GM12878 (cell line): ENCODE measurements at regions of chr3 and their contacts with region 1.

Region 1: DNA sequence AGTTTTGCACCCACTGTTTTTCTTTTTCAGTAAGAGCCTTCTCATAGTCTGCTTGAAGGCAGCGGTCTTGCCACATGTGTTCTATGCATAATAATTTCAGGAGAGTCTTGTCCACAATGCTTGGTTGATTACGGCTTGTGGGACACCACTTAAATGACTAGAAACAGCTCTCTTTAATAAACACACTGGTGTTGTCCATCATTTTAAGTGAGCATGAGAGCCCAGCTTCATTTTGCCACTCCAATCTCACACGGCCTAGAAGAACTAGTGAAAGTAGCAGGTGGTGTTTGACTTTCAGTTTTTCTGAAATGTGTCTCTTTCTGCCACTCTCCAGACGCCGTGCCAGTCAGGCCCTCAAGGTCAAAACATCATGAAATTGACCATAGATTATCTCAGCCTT is 292.1 kb downstream of the LPP start:
- DNase-seq: peak; percentile 70
- ATAC-seq: peak; percentile 83
- H3K4me3 ChIP-seq: no peak overlapping the region
- H3K27ac ChIP-seq: no peak overlapping the region; the same call in 1 of the 2 replicates
- H3K4me1 ChIP-seq: peaks cover 14% of the 10 kb centered on the region
- H3K27me3 ChIP-seq: no peaks in the 10 kb centered on the region
- CTCF ChIP-seq: no peak
- EP300 ChIP-seq: no peak
- POLR2A ChIP-seq: no peak
- RAD21 ChIP-seq: no peak

Region 2: DNA sequence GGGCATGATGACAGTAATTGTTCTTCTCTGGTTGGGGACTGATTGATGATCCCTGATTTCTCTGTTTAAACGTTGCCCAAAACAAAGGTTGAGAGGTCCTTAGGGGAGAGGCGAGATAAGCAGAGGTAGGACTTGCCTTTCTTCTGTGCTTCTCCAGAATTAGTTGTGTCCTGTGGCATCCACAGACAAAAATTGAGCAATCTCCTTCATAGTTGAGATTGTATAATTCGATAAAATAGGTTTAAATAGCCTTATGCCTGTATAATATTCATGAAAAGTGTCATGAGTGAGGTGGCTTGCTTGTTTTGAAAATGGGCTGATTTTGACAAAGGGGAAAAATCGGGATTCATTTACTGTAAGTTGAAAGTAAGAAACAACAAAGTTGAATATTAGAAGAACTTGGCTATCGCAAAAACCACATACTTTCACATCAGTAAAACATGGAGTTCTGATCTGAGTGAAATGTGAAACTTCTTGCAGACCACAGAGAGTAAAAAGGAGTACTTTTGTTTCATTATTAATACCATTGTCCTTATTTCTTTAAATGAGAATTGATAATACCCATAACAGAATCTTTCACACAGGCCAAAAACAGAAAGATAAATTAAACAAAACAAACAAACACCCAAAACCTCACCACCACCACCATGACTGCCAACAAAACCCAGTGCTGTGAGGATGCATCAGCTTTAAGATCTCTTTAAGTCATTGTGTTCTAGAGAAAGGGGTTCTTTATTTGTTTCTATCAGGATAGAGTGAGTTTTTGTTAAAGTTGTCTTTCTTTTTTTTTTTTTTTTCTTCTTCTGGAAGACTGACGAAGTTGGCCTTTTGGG is 136.4 kb before region 1 on chr3:
- CTCF ChIA-PET with region 1: no interaction called
- POLR2A ChIA-PET with region 1: no interaction called
- RAD21 ChIA-PET with region 1: no interaction called
- SMC1A ChIA-PET with region 1: no interaction called
- in situ Hi-C with region 1: no loop called
- intact Hi-C with region 1: loop called (anchors 1 kb)
- DNase-seq: peak; percentile 54
- ATAC-seq: peak; percentile 89
- H3K4me3 ChIP-seq: no peak overlapping the region
- H3K27ac ChIP-seq: no peak overlapping the region
- H3K4me1 ChIP-seq: peaks cover 10% of the 10 kb centered on the region; the same call in 1 of the 2 replicates
- H3K27me3 ChIP-seq: peaks cover 0 to 8% of the 10 kb centered on the region in 2 experiments; a peak in 1 of 4 replicates
- CTCF ChIP-seq: no peak
- EP300 ChIP-seq: peak; percentile 68 to 77; a peak in 3 of 4 replicates
- POLR2A ChIP-seq: no peak
- RAD21 ChIP-seq: no peak

Region 3: GRCh38 chr3:188389711-188390342 is 56.2 kb before region 1 on chr3:
- CTCF ChIA-PET with region 1: no interaction called
- POLR2A ChIA-PET with region 1: no interaction called
- RAD21 ChIA-PET with region 1: no interaction called
- SMC1A ChIA-PET with region 1: no interaction called
- in situ Hi-C with region 1: no loop called
- intact Hi-C with region 1: loop called (anchors 5 kb)
- DNase-seq: no peak
- ATAC-seq: peak; percentile 95
- H3K4me3 ChIP-seq: no peak overlapping the region
- H3K27ac ChIP-seq: no peak overlapping the region
- H3K4me1 ChIP-seq: peaks cover 6% of the 10 kb centered on the region; the same call in 1 of the 2 replicates
- H3K27me3 ChIP-seq: no peaks in the 10 kb centered on the region; a peak in 1 of 4 replicates
- CTCF ChIP-seq: no peak
- EP300 ChIP-seq: peak in 1 of 2 experiments; percentile 86; a peak in 2 of 4 replicates
- POLR2A ChIP-seq: no peak
- RAD21 ChIP-seq: no peak

Region 4: DNA sequence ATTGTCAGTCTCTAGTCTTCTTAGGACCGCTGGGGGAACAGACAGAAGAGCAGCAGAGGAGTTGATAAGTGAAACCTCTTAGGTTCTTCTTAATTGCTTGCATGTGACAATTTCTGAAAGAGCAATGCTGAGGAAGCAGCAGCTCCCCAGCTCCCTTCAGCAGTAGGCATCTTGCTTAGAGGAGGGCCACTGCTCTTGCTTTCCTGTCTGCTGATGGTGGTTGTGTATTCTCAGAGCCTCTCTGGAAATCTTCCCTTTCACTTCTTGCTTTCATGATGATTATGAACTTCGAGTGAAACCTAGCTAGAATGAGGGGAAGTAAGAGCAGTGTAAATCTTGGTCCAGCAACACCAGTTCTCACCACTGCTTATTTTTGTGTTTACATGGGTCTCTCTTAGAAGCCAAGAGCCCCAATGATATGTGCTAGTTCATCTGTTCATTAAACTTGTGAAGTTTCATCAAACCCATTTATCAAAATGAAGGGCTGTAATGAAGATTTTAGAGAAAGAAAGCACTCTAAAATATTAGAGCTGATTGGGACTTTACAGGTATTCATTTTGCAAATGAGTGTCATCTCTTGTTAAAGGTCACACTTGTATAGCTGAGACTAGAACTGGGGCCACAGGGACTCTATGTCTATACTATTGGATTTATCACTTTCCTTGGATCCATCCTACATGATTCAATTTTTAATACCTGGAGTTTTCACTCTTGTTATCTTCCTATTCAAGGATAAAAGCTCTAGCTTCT is 45.3 kb before region 1 on chr3:
- CTCF ChIA-PET with region 1: no interaction called
- POLR2A ChIA-PET with region 1: no interaction called
- RAD21 ChIA-PET with region 1: no interaction called
- SMC1A ChIA-PET with region 1: interaction called, 3 read pairs
- in situ Hi-C with region 1: no loop called
- intact Hi-C with region 1: loop called (anchors 5 kb)
- DNase-seq: peak; percentile 68
- ATAC-seq: peak; percentile 88
- H3K4me3 ChIP-seq: no peak overlapping the region
- H3K27ac ChIP-seq: no peak overlapping the region
- H3K4me1 ChIP-seq: peaks cover 15% of the 10 kb centered on the region
- H3K27me3 ChIP-seq: peaks cover 0 to 1% of the 10 kb centered on the region in 2 experiments; a peak in 3 of 4 replicates
- CTCF ChIP-seq: no peak
- EP300 ChIP-seq: no peak
- POLR2A ChIP-seq: no peak
- RAD21 ChIP-seq: no peak

Region 5: DNA sequence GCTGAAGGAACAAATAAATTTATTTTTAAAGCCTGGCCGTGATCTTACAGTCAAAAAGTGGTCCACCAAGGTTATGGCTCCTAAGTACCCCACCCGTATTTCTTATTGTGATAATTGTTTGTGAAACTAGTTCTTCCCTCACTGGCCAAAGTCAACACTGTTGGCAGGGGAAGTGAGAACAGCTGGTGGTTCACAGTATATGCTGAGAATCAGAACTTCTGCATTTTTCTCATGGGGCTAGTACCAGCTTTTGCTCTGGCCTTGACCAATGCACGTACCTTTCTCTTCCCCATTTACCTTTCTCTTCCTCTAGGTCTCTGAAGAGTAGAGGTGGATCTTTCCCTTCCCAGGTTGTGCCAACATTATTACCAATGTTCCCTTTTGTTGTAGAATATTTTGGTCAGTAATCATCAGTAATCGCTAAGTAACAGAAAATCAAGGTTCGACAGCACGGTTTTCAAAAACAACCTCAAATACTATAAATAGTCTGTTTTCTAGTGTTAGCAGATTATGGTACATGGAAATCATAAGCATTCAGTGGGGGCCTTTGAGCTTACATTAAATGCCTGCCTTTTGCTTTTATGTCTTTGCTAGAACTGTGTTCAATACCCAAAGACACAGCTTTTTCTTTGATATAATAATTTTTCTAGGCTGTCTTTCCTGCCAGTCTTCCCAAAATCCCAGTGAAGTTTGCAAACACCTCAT is 24.0 kb before region 1 on chr3:
- CTCF ChIA-PET with region 1: no interaction called
- POLR2A ChIA-PET with region 1: no interaction called
- RAD21 ChIA-PET with region 1: no interaction called
- SMC1A ChIA-PET with region 1: interaction called, 3 read pairs
- in situ Hi-C with region 1: no loop called
- intact Hi-C with region 1: loop called (anchors 1 kb)
- DNase-seq: peak; percentile 78
- ATAC-seq: peak; percentile 100
- H3K4me3 ChIP-seq: no peak overlapping the region
- H3K27ac ChIP-seq: no peak overlapping the region; the same call in 1 of the 2 replicates
- H3K4me1 ChIP-seq: peaks cover 14% of the 10 kb centered on the region
- H3K27me3 ChIP-seq: no peaks in the 10 kb centered on the region; a peak in 1 of 4 replicates
- CTCF ChIP-seq: no peak
- EP300 ChIP-seq: peak in 1 of 2 experiments; percentile 82; a peak in 2 of 4 replicates
- POLR2A ChIP-seq: no peak
- RAD21 ChIP-seq: no peak

Region 6: GRCh38 chr3:188489639-188490405 is 43.8 kb after region 1 on chr3:
- CTCF ChIA-PET with region 1: no interaction called
- POLR2A ChIA-PET with region 1: no interaction called
- RAD21 ChIA-PET with region 1: no interaction called
- SMC1A ChIA-PET with region 1: no interaction called
- in situ Hi-C with region 1: no loop called
- intact Hi-C with region 1: no loop called
- DNase-seq: no peak
- ATAC-seq: no peak
- H3K4me3 ChIP-seq: no peak overlapping the region
- H3K27ac ChIP-seq: no peak overlapping the region
- H3K4me1 ChIP-seq: no peaks in the 10 kb centered on the region
- H3K27me3 ChIP-seq: no peaks in the 10 kb centered on the region
- CTCF ChIP-seq: no peak
- EP300 ChIP-seq: no peak
- POLR2A ChIP-seq: no peak
- RAD21 ChIP-seq: no peak